CD8-positive, alpha-beta memory T cell (primary cell): ENCODE measurements at regions of chr16 and their contacts with region 1.

Region 1: GRCh38 chr16:10504404-10504885 is 76.0 kb downstream of the EMP2 start:
- DNase-seq: no peak
- H3K4me3 ChIP-seq: no peak overlapping the region
- H3K4me3 Mint-ChIP-seq: no peak overlapping the region
- H3K27ac ChIP-seq: no peak overlapping the region
- H3K27ac Mint-ChIP-seq: peak overlapping the region in 4 of 8 donors; percentile 8 to 50 (median 34)
- H3K4me1 ChIP-seq: no peaks in the 10 kb centered on the region
- H3K4me1 Mint-ChIP-seq: peaks cover 0 to 8% (median 2%) of the 10 kb centered on the region in 3 donors
- H3K27me3 ChIP-seq: no peaks in the 10 kb centered on the region
- H3K27me3 Mint-ChIP-seq: no peaks in the 10 kb centered on the region

Region 2: GRCh38 chr16:9384141-9384540 is 1120.3 kb before region 1 on chr16:
- CTCF ChIA-PET with region 1: no interaction called
- POLR2A ChIA-PET with region 1: no interaction called
- DNase-seq: no peak
- H3K4me3 ChIP-seq: no peak overlapping the region
- H3K4me3 Mint-ChIP-seq: no peak overlapping the region
- H3K27ac ChIP-seq: no peak overlapping the region
- H3K27ac Mint-ChIP-seq: no peak overlapping the region
- H3K4me1 ChIP-seq: no peaks in the 10 kb centered on the region
- H3K4me1 Mint-ChIP-seq: no peaks in the 10 kb centered on the region
- H3K27me3 ChIP-seq: no peaks in the 10 kb centered on the region
- H3K27me3 Mint-ChIP-seq: peaks cover 0 to 3% of the 10 kb centered on the region in 2 donors

Region 3: GRCh38 chr16:10314811-10315210 is 189.6 kb before region 1 on chr16:
- CTCF ChIA-PET with region 1: interaction called, 51 read pairs
- POLR2A ChIA-PET with region 1: no interaction called
- DNase-seq: peak in 2 of 5 donors; percentile 39 to 44
- H3K4me3 ChIP-seq: no peak overlapping the region
- H3K4me3 Mint-ChIP-seq: no peak overlapping the region
- H3K27ac ChIP-seq: no peak overlapping the region
- H3K27ac Mint-ChIP-seq: no peak overlapping the region
- H3K4me1 ChIP-seq: no peaks in the 10 kb centered on the region
- H3K4me1 Mint-ChIP-seq: peaks cover 22 to 27% (median 26%) of the 10 kb centered on the region in 3 donors
- H3K27me3 ChIP-seq: no peaks in the 10 kb centered on the region
- H3K27me3 Mint-ChIP-seq: peaks cover 0 to 3% of the 10 kb centered on the region in 2 donors

Region 4: GRCh38 chr16:10419712-10420111 is 84.7 kb before region 1 on chr16:
- CTCF ChIA-PET with region 1: no interaction called
- POLR2A ChIA-PET with region 1: no interaction called
- DNase-seq: no peak
- H3K4me3 ChIP-seq: no peak overlapping the region
- H3K4me3 Mint-ChIP-seq: no peak overlapping the region
- H3K27ac ChIP-seq: no peak overlapping the region
- H3K27ac Mint-ChIP-seq: peak overlapping the region in 1 of 8 donors; percentile 11
- H3K4me1 ChIP-seq: no peaks in the 10 kb centered on the region
- H3K4me1 Mint-ChIP-seq: peaks cover 0 to 2% (median 0%) of the 10 kb centered on the region in 3 donors
- H3K27me3 ChIP-seq: no peaks in the 10 kb centered on the region
- H3K27me3 Mint-ChIP-seq: no peaks in the 10 kb centered on the region

Region 5: DNA sequence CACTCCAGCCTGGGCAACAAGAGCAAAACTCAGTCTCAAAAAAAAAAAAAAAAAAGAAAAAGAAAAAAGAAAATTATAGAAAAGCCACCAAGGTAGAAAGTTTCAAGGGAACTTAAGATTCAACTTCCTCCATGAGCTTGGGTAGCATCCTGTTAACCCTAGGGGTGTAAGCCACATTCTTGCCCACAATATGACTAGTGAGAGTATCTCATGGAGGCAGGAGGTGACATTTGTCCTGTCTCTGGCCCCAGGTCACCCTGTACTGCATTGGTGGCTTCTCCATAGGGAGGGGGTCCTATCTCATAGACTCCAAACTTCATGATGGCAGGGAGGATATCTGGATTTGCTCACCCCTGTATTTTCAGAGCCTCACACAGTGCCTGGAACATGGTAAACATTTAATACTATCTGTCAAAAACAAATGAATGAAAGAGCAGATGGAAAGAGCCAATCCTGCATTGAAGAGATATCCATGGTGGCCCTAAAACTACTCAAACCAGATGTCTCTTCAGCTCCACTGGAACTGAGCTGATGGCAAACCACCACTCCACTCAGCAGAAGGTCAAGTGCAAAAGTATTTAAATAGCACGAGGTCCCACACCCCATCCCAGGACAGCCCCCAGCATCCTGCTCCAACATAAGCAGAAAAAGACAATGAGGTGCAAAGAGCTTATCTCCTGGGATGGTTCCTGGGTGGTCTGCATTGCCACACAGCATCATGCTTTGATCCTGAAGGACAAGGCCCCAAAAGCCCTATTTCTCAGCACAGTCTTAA is 25.6 kb after region 1 on chr16:
- CTCF ChIA-PET with region 1: no interaction called
- POLR2A ChIA-PET with region 1: no interaction called
- DNase-seq: no peak
- H3K4me3 ChIP-seq: no peak overlapping the region
- H3K4me3 Mint-ChIP-seq: no peak overlapping the region
- H3K27ac ChIP-seq: no peak overlapping the region
- H3K27ac Mint-ChIP-seq: no peak overlapping the region
- H3K4me1 ChIP-seq: no peaks in the 10 kb centered on the region
- H3K4me1 Mint-ChIP-seq: no peaks in the 10 kb centered on the region
- H3K27me3 ChIP-seq: no peaks in the 10 kb centered on the region
- H3K27me3 Mint-ChIP-seq: peaks cover 0 to 7% of the 10 kb centered on the region in 2 donors